Activated naive CD4-positive, alpha-beta T cell treated with anti-CD3 and anti-CD28 coated beads for 36 hours (primary cell): ENCODE measurements at regions of chr5 and their contacts with region 1.

Region 1: GRCh38 chr5:79235634-79236363 is at the start of gene JMY:
- DNase-seq: peak; percentile 90
- H3K4me3 Mint-ChIP-seq: peak within 1 kb of the TSS; percentile 91
- H3K27ac Mint-ChIP-seq: peak within 1 kb of the TSS; percentile 99
- H3K4me1 Mint-ChIP-seq: peaks cover 17% of the 10 kb centered on the region
- H3K27me3 Mint-ChIP-seq: no peaks in the 10 kb centered on the region
- total RNA-seq, gene JMY: 11.8 to 12.1 TPM

Region 2: DNA sequence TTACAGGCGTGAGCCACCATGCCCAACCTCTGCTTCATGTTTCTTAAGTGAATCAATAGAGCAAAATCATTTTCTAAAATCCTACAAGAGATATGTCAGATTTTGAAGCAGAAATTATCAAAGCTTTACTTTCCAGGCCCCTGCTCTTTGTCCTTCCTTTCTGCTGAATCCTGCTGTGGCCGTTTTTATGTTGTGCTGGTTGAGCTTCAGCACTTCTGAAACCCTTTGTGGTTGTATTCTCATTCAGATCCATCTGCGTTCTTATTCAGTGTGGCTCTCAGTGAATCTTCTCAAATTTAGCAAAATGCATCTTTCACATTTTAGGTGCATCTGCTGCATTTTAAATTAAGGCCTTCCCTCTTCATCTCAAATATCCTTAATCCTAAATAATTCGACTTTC is 26.1 kb after region 1 on chr5:
- CTCF ChIA-PET with region 1: no interaction called
- intact Hi-C with region 1: loop called (anchors 1 kb)
- DNase-seq: no peak
- H3K4me3 Mint-ChIP-seq: no peak overlapping the region
- H3K27ac Mint-ChIP-seq: no peak overlapping the region
- H3K4me1 Mint-ChIP-seq: peaks cover 33% of the 10 kb centered on the region
- H3K27me3 Mint-ChIP-seq: no peaks in the 10 kb centered on the region

Region 3: DNA sequence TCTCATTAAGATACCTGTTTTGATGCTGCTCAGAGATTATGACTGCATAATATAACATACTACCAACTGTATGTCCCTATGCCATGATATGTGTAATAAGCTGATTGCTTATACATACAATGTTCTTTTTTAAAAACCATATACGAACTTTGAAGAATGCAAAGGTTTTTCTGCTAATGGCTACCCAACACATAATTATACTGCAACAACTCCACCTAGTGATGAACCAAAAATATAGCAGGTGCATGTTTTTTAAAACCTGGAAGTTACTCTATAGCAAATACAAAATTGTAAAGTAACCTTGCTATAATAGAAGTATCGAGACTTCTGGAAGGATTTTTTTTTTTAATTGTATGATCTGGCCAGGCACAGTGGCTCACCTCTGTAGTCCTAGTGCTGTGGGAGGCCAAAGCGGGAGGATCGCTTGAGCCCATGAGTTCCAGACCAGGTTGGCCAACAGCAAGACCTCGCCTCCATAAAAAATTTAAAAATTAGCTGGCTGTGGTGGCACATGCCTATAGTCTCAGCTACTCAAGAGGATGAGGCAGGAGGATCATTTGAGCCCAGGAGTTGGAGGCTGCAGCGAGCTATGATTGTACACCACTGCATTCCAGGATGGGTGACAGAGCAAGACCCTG is 229.0 kb after region 1 on chr5:
- CTCF ChIA-PET with region 1: no interaction called
- intact Hi-C with region 1: loop called (anchors 5 kb)
- DNase-seq: no peak
- H3K4me3 Mint-ChIP-seq: no peak overlapping the region
- H3K27ac Mint-ChIP-seq: no peak overlapping the region
- H3K4me1 Mint-ChIP-seq: peaks cover 2% of the 10 kb centered on the region
- H3K27me3 Mint-ChIP-seq: peaks cover 7% of the 10 kb centered on the region

Region 4: GRCh38 chr5:79560771-79561524 is 325.1 kb after region 1 on chr5:
- CTCF ChIA-PET with region 1: no interaction called
- intact Hi-C with region 1: loop called (anchors 2 kb)
- DNase-seq: peak; percentile 62
- H3K4me3 Mint-ChIP-seq: peak overlapping the region; percentile 4
- H3K27ac Mint-ChIP-seq: peak overlapping the region; percentile 99
- H3K4me1 Mint-ChIP-seq: peaks cover 40% of the 10 kb centered on the region
- H3K27me3 Mint-ChIP-seq: no peaks in the 10 kb centered on the region

Region 5: DNA sequence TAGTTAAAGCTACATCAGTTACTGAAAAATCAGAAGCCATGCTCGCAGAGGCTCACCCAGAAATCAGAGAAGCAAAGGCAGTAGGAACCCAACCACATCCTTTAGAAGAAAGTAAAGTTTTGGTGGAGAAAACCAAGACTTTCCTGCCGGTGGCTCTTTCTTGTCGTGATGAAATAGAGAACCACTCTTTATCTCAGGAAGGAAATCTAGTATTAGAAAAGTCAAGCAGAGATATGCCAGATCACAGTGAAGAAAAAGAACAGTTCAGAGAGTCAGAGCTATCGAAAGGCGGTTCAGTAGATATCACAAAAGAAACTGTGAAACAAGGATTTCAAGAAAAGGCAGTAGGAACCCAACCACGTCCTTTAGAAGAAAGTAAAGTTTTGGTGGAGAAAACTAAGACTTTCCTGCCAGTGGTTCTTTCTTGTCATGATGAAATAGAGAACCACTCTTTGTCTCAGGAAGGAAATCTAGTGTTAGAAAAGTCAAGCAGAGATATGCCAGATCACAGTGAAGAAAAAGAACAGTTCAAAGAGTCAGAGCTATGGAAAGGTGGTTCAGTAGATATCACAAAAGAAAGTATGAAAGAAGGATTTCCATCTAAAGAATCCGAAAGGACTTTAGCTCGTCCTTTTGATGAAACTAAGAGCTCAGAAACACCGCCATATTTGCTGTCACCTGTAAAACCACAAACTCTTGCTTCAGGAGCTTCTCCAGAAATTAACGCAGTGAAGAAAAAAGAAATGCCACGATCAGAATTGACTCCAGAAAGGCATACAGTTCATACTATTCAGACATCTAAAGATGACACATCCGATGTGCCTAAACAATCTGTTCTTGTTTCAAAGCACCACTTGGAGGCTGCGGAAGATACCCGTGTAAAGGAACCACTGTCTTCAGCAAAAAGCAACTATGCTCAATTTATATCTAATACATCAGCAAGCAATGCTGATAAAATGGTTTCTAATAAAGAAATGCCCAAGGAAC is 501.0 kb after region 1 on chr5:
- CTCF ChIA-PET with region 1: no interaction called
- intact Hi-C with region 1: loop called (anchors 1 kb)
- DNase-seq: peak; percentile 28
- H3K4me3 Mint-ChIP-seq: peak overlapping the region; percentile 50
- H3K27ac Mint-ChIP-seq: peak overlapping the region; percentile 58
- H3K4me1 Mint-ChIP-seq: peaks cover 60% of the 10 kb centered on the region
- H3K27me3 Mint-ChIP-seq: peaks cover 31% of the 10 kb centered on the region

Region 6: DNA sequence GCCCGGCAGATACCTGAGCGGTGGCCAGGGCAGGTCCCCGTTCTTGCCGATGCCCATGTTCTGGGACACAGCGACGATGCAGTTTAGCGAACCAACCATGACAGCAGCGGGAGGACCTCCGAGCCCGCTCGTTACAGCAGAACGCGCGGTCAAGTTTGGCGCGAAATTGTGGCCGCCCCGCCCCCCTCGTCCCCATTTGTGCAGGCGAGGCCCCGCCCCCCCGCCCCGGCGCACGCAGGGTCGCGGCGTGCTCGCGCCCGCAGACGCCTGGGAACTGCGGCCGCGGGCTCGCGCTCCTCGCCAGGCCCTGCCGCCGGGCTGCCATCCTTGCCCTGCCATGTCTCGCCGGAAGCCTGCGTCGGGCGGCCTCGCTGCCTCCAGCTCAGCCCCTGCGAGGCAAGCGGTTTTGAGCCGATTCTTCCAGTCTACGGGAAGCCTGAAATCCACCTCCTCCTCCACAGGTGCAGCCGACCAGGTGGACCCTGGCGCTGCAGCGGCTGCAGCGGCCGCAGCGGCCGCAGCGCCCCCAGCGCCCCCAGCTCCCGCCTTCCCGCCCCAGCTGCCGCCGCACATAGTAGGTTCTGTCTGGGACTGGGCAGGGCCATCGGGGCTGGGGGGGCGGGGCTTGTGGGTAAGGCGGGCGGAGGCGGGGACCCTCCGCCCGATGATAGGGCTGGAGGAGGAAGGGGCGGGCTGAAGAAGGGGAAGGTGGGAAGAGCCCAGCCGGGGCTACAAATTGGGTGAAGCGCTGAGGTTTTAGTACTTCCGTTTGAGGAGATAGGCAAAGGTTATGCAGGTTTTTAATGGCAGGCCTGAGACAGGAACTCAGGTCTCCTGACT is 1418.8 kb after region 1 on chr5 and contains the starts of genes DHFR and MSH3:
- CTCF ChIA-PET with region 1: no interaction called
- intact Hi-C with region 1: loop called (anchors 2 kb)
- DNase-seq: peak; percentile 95
- H3K4me3 Mint-ChIP-seq: peak within 1 kb of the TSS; percentile 95
- H3K27ac Mint-ChIP-seq: peak within 1 kb of the TSS; percentile 99
- H3K4me1 Mint-ChIP-seq: peaks cover 25% of the 10 kb centered on the region
- H3K27me3 Mint-ChIP-seq: no peaks in the 10 kb centered on the region
- total RNA-seq, gene DHFR: 107 to 112 TPM
- total RNA-seq, gene MSH3: 25.1 to 25.8 TPM